PC-9 (cell line): ENCODE measurements at regions of chr9 and their contacts with region 1.

Region 1: GRCh38 chr9:14170973-14171596 is 142.9 kb downstream of the NFIB start:
- DNase-seq: peak in 1 of 2 experiments; percentile 68
- H3K4me3 ChIP-seq: no peak overlapping the region
- H3K27ac ChIP-seq: peak overlapping the region; percentile 72
- H3K4me1 ChIP-seq: peaks cover 17% of the 10 kb centered on the region
- H3K27me3 ChIP-seq: no peaks in the 10 kb centered on the region
- CTCF ChIP-seq: no peak

Region 2: DNA sequence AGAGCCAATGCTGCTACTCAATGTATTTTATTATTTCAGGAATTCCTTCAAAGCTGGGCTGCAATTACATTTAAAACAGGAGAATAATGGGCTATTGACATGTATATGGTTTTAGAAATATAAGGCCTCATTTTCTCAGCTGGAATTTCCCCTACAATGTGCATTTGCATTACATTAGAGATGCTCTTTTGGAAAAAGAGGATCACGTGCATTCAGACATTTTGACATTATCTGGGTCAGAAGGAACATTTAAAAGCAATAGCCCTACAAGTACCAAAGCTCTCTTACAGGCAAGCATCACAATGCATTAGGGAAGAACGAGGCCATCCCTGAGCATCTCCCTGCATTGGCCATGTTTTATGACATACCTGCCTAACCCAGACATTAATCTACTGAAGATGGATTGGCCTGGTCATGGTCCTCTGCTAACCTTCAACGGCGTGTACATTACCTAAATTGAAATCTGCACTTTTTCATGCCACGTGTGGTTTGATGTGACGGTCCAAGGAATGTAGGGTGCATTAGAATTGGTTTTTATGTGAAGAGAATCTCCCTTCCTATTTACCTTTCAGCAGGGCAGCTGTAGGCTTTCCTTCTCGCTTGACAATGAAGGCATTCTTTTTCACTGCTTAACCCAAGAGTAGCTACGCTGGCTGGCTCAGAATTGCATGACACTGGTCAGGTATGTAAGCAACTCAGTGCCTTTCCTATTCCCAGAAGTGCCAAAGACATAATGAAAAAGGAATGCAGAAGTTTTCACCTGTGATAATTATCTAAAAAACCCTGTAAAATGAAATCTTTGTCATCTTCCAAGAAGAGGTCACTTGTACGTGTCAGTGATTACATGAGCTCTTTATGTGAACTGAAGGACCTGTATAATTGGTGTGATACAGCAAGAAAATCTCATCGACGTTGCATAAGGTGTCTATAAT is 679.3 kb before region 1 on chr9:
- CTCF ChIA-PET with region 1: no interaction called
- POLR2A ChIA-PET with region 1: interaction called, 20 read pairs
- intact Hi-C with region 1: no loop called
- DNase-seq: peak in 1 of 2 experiments; percentile 62
- H3K4me3 ChIP-seq: no peak overlapping the region
- H3K27ac ChIP-seq: peak overlapping the region; percentile 41; the same call in 1 of the 2 replicates
- H3K4me1 ChIP-seq: no peaks in the 10 kb centered on the region
- H3K27me3 ChIP-seq: no peaks in the 10 kb centered on the region
- CTCF ChIP-seq: no peak

Region 3: DNA sequence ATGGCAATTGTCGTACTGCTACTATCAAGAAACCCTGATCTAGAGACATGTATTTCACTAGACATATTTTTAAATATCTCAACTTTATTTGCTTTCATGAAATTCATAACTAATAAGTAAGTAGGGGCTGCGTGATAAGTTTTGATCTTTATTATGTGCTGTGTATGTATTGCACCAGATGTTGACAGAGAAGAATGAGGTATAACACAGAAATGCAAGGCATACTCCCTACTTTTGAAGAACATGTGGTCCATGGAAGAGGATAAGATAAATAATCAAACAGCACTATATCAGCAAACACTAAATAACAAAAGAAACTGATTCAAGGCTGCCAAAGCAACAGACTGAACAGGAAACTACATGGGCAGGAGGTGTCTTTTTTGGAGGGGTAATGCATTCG is 678.2 kb after region 1 on chr9:
- CTCF ChIA-PET with region 1: no interaction called
- POLR2A ChIA-PET with region 1: no interaction called
- intact Hi-C with region 1: no loop called
- DNase-seq: no peak
- H3K4me3 ChIP-seq: no peak overlapping the region
- H3K27ac ChIP-seq: no peak overlapping the region
- H3K4me1 ChIP-seq: no peaks in the 10 kb centered on the region
- H3K27me3 ChIP-seq: no peaks in the 10 kb centered on the region
- CTCF ChIP-seq: no peak